Posterior vena cava (tissue), 2 donors: ENCODE measurements at regions of chr19 and their contacts with region 1.

Region 1: GRCh38 chr19:1767464-1767933 is 14.2 kb downstream of the ONECUT3 start:
- DNase-seq: peak; percentile 87

Region 2: GRCh38 chr19:1549332-1549945 is 218.1 kb before region 1 on chr19:
- intact Hi-C with region 1: loop called in 1 of 2 experiments (anchors 5 kb)
- DNase-seq: no peak

Region 3: GRCh38 chr19:1825909-1826556 is 58.5 kb after region 1 on chr19:
- intact Hi-C with region 1: loop called in 1 of 2 experiments (anchors 2 kb)
- DNase-seq: peak; percentile 93